ENCODE measurements at regions of chr11 and their contacts with region 1.

Region 1: GRCh38 chr11:747158-748006 is at the start of gene TALDO1:
- DNase-seq: peak; percentile 54 to 96 (median 60)
- ATAC-seq: peak; percentile 92
- H3K4me3 ChIP-seq: peak within 1 kb of the TSS; percentile 67
- H3K4me3 Mint-ChIP-seq: peak within 1 kb of the TSS; percentile 80 to 93 (median 88)
- H3K27ac ChIP-seq: peak within 1 kb of the TSS; percentile 80
- H3K27ac Mint-ChIP-seq: peak within 1 kb of the TSS; percentile 73 to 90 (median 83)
- H3K4me1 ChIP-seq: peaks cover 10% of the 10 kb centered on the region in 2 donors
- H3K4me1 Mint-ChIP-seq: peaks cover 5 to 28% (median 19%) of the 10 kb centered on the region in 7 donors
- H3K27me3 ChIP-seq: no peaks in the 10 kb centered on the region
- H3K27me3 Mint-ChIP-seq: no peaks in the 10 kb centered on the region
- total RNA-seq, gene TALDO1: 61.4 to 272 (median 90.3) TPM

Region 2: DNA sequence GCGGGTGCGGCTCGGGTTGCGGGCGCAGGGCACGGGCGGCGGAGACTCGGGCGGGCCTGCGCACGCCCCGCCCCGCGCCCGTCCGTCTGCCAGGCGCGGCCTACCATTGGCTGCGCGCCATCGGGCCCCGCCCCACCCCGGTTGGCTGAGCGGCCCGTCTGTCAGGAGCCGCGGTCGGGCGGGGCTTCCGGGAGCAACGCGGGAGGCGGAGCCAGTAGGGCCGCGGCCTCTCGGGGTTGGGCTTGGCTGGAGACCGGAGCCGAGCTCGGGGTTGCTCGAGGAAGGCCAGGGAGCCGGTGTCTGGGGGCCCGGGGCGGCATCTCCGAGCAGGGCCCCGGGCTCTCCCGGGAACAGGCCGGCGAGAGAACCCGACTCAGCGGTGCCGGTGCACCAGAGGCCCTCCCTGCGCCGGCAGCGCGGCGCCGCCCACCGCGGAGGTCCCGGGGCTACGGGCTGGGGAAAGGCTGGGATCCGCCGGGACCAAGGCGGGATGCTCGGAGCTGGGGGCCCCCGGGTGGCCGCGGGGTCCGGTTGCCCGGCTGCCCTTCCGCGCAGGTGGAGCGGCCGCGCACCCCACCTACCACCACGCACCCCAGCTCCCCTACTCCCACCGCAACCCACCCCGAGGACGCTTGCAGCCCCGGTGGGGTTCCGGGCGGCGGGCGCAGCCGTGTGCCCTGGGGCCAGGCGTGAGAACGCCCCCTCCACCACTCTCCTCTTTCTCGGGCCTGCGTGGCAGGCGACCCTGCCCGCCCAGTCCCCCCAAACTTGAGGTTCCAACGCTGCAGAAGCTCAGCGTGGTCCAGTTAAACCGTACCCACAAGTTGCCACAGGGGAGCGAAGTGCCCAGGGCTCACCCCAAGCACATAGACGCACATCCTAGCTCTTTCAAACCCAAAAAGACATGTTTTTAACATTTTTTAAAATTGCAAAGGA is 211.6 kb before region 1 on chr11 and contains the start of gene HRAS:
- CTCF ChIA-PET with region 1: no interaction called
- POLR2A ChIA-PET with region 1: no interaction called
- intact Hi-C with region 1: no loop called
- DNase-seq: peak; percentile 92 to 99 (median 96)
- ATAC-seq: peak; percentile 93
- H3K4me3 ChIP-seq: peak within 1 kb of the TSS; percentile 66
- H3K4me3 Mint-ChIP-seq: peak within 1 kb of the TSS; percentile 87 to 97 (median 91)
- H3K27ac ChIP-seq: peak within 1 kb of the TSS; percentile 75
- H3K27ac Mint-ChIP-seq: peak within 1 kb of the TSS; percentile 84 to 96 (median 91)
- H3K4me1 ChIP-seq: peaks cover 20 to 21% of the 10 kb centered on the region in 2 donors
- H3K4me1 Mint-ChIP-seq: peaks cover 5 to 16% (median 11%) of the 10 kb centered on the region in 7 donors
- H3K27me3 ChIP-seq: no peaks in the 10 kb centered on the region
- H3K27me3 Mint-ChIP-seq: no peaks in the 10 kb centered on the region
- total RNA-seq, gene HRAS: 22.3 to 52.0 (median 31.9) TPM

Region 3: DNA sequence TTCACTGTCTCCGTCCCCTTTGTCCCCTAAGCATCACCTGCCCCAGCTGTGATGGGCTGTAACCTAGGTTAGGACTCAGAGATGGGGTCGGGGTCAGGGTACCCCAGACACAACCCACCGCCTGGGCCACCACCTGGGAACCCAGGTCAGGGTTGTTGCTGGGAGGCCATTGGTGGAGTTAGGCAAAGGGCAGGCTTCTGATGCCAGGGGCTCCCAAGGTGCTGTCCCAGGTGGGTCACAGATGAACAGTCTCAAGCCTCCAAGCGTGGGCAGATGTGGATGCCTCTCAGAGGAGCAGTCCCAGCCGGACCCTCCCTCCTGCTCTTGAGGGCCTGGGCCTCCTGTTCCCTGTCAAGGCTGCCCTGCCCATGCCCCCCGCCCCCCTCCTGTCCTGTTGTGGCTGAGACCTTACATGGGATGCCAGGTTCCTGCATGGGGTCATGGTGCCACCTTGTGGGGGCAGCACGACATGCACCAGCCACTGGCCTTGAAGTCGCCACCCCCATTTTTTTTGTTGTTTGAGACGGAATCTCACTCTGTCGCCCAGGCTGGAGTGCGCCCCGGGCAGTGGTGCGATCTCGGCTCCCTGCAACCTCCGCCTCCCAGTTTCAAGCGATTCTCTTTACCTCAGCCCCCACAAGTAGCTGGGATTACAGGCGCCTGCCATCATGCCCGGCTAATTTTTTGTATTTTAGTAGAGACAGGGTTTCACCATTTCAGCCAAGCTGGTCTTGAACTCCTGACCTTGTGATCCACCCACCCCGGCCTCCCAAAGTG is 17.8 kb after region 1 on chr11:
- CTCF ChIA-PET with region 1: interaction called, 8 read pairs
- POLR2A ChIA-PET with region 1: interaction called, 5 read pairs
- intact Hi-C with region 1: loop called in 1 of 2 experiments (anchors 2 kb)
- DNase-seq: peak; percentile 47 to 74 (median 68)
- ATAC-seq: peak; percentile 92
- H3K4me3 ChIP-seq: no peak overlapping the region
- H3K4me3 Mint-ChIP-seq: no peak overlapping the region
- H3K27ac ChIP-seq: no peak overlapping the region
- H3K27ac Mint-ChIP-seq: peak overlapping the region in 5 of 9 donors; percentile 40 to 85 (median 64)
- H3K4me1 ChIP-seq: no peaks in the 10 kb centered on the region
- H3K4me1 Mint-ChIP-seq: peaks cover 0 to 7% (median 0%) of the 10 kb centered on the region in 7 donors
- H3K27me3 ChIP-seq: no peaks in the 10 kb centered on the region
- H3K27me3 Mint-ChIP-seq: no peaks in the 10 kb centered on the region

Region 4: DNA sequence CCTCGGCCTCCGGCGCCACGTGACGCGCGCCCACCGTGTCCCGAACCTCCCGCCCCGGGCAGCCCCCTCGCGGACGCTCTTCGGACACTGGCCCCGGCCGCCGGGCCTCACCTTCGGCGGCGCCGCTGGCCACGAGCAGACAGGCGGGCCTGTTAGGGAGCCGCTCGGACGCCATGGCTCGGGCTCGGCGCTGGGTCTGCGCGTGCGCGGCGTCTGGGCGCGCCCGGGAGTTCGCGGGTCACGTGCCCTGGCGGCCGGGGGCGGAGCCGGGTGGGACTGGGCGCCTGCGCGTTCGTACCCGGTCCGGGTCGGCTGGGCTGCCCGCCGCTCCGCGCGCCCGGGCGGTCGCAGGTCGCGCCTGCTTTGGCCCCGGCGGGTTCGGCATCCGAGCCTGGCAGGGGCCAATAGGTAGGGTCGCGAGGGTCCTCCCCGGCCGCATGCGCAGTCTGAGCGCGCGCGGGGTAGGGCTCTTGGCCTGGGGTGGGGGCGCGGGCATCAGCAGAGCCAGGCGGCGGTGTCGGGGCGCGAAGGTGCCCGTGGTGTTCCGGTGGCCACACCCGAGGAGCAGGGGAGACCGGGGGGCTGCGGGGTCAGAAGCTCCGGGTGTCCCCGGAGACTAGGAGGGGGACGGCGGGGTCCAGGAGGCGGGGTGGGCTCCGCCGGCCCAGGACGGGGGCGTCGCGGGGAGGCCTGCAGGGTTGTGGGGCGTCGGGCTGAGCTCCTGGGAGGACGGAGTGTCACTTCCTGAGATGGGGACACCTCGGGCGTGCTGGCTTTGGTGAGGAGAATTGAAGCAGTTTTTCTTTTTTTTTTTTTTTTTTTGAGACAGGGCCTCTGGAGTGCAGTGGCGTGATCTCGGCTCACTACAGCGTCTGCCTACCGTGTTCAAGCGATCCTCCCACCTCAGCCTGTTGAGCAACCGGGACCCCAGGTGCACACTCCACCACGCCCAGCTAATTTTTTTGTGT is 30.2 kb after region 1 on chr11 and contains the start of gene GATD1:
- CTCF ChIA-PET with region 1: no interaction called
- POLR2A ChIA-PET with region 1: interaction called, 7 read pairs
- intact Hi-C with region 1: loop called in 1 of 2 experiments (anchors 1 kb)
- DNase-seq: peak; percentile 86 to 99 (median 93)
- ATAC-seq: peak; percentile 93
- H3K4me3 ChIP-seq: peak within 1 kb of the TSS; percentile 59
- H3K4me3 Mint-ChIP-seq: peak within 1 kb of the TSS; percentile 72 to 91 (median 83)
- H3K27ac ChIP-seq: peak within 1 kb of the TSS; percentile 85
- H3K27ac Mint-ChIP-seq: peak within 1 kb of the TSS; percentile 40 to 92 (median 78)
- H3K4me1 ChIP-seq: peaks cover 12 to 14% of the 10 kb centered on the region in 2 donors
- H3K4me1 Mint-ChIP-seq: peaks cover 7 to 29% (median 23%) of the 10 kb centered on the region in 7 donors
- H3K27me3 ChIP-seq: no peaks in the 10 kb centered on the region
- H3K27me3 Mint-ChIP-seq: no peaks in the 10 kb centered on the region
- total RNA-seq, gene GATD1: 37.8 to 59.2 (median 52.9) TPM

Region 5: DNA sequence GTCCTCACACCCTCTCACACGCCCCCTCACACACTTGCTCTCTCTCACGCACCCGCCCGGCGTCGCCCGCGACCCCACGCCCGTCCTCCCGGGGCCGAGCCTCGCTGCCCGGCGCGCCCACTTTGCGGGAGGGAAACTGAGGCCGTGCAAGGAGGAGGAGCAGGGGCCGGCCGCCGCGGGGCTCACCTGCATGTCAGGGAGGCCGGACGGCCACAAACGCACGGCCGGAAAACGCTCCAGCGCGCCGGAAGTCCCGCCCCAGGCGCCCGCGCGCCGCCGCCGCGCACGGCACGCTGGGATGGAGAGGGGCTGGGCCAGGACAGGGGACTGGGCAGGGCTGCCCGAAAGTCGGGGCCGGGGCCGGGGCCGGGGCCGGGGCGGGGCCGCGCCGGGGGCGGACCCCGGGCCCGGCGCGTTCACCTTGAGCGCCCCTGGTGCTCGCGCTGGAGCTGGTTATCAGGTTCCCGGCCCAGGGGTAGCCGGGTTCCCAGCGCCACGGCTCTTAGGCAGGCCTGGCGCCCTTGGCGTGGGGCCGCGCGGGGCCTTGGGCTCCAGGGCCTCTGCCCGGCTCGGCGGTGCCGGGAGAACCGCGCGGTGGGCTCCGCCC is 163.3 kb after region 1 on chr11 and contains the start of gene CHID1:
- CTCF ChIA-PET with region 1: no interaction called
- POLR2A ChIA-PET with region 1: no interaction called
- intact Hi-C with region 1: loop called in 1 of 2 experiments (anchors 5 kb)
- DNase-seq: peak; percentile 60 to 94 (median 73)
- ATAC-seq: peak; percentile 98
- H3K4me3 ChIP-seq: peak within 1 kb of the TSS; percentile 68
- H3K4me3 Mint-ChIP-seq: peak within 1 kb of the TSS; percentile 82 to 99 (median 90)
- H3K27ac ChIP-seq: peak within 1 kb of the TSS; percentile 79
- H3K27ac Mint-ChIP-seq: peak within 1 kb of the TSS; percentile 73 to 97 (median 86)
- H3K4me1 ChIP-seq: peaks cover 4 to 10% of the 10 kb centered on the region in 2 donors
- H3K4me1 Mint-ChIP-seq: peaks cover 15 to 24% (median 20%) of the 10 kb centered on the region in 7 donors
- H3K27me3 ChIP-seq: no peaks in the 10 kb centered on the region
- H3K27me3 Mint-ChIP-seq: no peaks in the 10 kb centered on the region
- total RNA-seq, gene CHID1: 30.8 to 56.3 (median 53.0) TPM

Measured in naive thymus-derived CD4-positive, alpha-beta T cell (primary cell).